CD4-positive, alpha-beta memory T cell (primary cell): ENCODE measurements at regions of chr17 and their contacts with region 1.

Region 1: GRCh38 chr17:7045909-7046724 is 2.2 kb upstream of the SLC16A11 start:
- DNase-seq: peak; percentile 60 to 79 (median 74)
- H3K4me3 ChIP-seq: peak overlapping the region; percentile 67 to 84
- H3K4me3 Mint-ChIP-seq: peak overlapping the region; percentile 83 to 94 (median 90)
- H3K27ac ChIP-seq: peak overlapping the region; percentile 76
- H3K27ac Mint-ChIP-seq: peak overlapping the region; percentile 88 to 98 (median 95)
- H3K4me1 ChIP-seq: peaks cover 47% of the 10 kb centered on the region
- H3K4me1 Mint-ChIP-seq: peaks cover 15 to 54% (median 27%) of the 10 kb centered on the region in 4 donors
- H3K27me3 ChIP-seq: no peaks in the 10 kb centered on the region
- H3K27me3 Mint-ChIP-seq: peaks cover 2% of the 10 kb centered on the region in 2 donors

Region 2: DNA sequence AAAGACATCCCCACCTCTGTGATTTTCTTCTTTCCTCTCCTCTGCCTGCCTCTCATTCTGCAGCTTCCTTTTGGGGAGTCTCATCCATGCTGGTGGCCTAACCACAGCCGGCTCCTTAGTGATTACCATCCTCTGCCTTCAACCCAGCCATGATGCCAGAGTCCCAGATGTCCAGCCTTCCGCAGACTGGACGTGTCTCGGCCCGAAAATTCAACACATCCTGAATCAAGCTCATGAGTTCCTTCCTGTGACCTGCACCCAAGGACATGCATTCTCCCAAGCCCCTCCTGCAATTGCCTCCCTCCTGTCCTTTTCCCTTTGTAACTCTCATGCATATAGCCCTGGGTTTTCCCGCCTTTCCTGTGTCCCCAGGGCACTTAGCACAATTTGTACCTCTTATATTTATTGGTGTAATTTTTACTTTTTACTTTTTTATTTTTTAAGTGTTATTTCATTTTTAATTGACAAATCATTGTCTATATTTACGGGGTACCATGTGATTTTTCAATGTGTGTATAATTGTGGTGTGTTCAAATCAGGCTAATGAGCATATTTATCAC is 331.7 kb before region 1 on chr17:
- CTCF ChIA-PET with region 1: no interaction called
- POLR2A ChIA-PET with region 1: no interaction called
- intact Hi-C with region 1: no loop called
- DNase-seq: no peak
- H3K4me3 ChIP-seq: no peak overlapping the region
- H3K4me3 Mint-ChIP-seq: peak overlapping the region in 5 of 8 donors; percentile 21 to 72 (median 42)
- H3K27ac ChIP-seq: no peak overlapping the region
- H3K27ac Mint-ChIP-seq: no peak overlapping the region
- H3K4me1 ChIP-seq: peaks cover 8% of the 10 kb centered on the region
- H3K4me1 Mint-ChIP-seq: peaks cover 10 to 20% (median 15%) of the 10 kb centered on the region in 4 donors
- H3K27me3 ChIP-seq: peaks cover 8% of the 10 kb centered on the region
- H3K27me3 Mint-ChIP-seq: peaks cover 43 to 55% of the 10 kb centered on the region in 2 donors

Region 3: DNA sequence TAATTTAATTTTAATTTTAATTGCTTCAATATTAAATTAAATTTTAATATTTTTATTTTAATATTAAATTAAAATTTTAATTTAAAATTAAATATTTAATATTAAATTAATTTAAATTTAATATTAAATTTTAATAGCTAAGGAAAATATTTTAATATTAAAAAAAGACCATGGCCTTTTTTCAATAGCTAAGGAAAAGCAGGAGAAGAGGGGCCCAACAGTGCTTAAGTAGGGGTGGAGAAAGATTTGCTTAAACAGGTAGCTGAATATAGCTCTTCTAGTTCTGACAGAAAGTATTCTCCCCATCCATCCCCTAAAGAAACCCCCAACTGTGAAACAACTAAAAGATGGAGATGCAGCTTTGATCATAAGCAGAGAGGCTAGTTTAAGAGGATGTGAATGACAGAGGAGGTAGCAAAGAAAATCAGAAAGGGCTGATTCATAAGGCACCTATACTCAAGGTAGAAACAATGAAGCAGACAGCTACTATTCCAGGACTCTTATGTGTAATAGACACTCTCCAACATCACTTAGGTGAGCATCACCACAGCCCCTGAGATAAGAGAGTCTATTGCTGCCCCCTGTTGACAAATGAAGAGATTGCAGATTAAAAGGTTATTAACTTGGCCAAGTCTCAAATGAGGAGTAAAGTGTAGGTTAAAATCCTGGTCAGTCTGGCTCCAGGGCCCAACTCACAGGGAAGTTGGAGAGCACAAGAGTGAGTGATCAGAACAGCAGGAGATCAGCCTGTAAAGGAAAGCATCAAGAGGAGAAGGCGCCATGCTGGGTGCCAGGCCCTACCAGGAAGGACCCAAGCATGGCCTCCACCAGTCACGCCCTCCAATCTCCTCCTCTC is 41.5 kb before region 1 on chr17:
- CTCF ChIA-PET with region 1: interaction called, 10 read pairs
- POLR2A ChIA-PET with region 1: no interaction called
- intact Hi-C with region 1: no loop called
- DNase-seq: peak; percentile 66 to 77 (median 77)
- H3K4me3 ChIP-seq: no peak overlapping the region
- H3K4me3 Mint-ChIP-seq: peak overlapping the region in 1 of 8 donors; percentile 5
- H3K27ac ChIP-seq: no peak overlapping the region
- H3K27ac Mint-ChIP-seq: peak overlapping the region; percentile 7 to 89 (median 81)
- H3K4me1 ChIP-seq: peaks cover 19% of the 10 kb centered on the region
- H3K4me1 Mint-ChIP-seq: peaks cover 16 to 33% (median 28%) of the 10 kb centered on the region in 4 donors
- H3K27me3 ChIP-seq: no peaks in the 10 kb centered on the region
- H3K27me3 Mint-ChIP-seq: no peaks in the 10 kb centered on the region

Region 4: GRCh38 chr17:7035591-7036368 is 10.3 kb before region 1 on chr17 and contains the start of gene SLC16A13:
- CTCF ChIA-PET with region 1: interaction called, 19 read pairs
- POLR2A ChIA-PET with region 1: interaction called, 95 read pairs
- intact Hi-C with region 1: no loop called
- DNase-seq: peak; percentile 97 to 100 (median 98)
- H3K4me3 ChIP-seq: peak within 1 kb of the TSS; percentile 32 to 81
- H3K4me3 Mint-ChIP-seq: peak within 1 kb of the TSS; percentile 90 to 96 (median 94)
- H3K27ac ChIP-seq: peak within 1 kb of the TSS; percentile 87
- H3K27ac Mint-ChIP-seq: peak within 1 kb of the TSS; percentile 97 to 99 (median 98)
- H3K4me1 ChIP-seq: peaks cover 65% of the 10 kb centered on the region
- H3K4me1 Mint-ChIP-seq: peaks cover 25 to 81% (median 49%) of the 10 kb centered on the region in 4 donors
- H3K27me3 ChIP-seq: no peaks in the 10 kb centered on the region
- H3K27me3 Mint-ChIP-seq: no peaks in the 10 kb centered on the region
- total RNA-seq, gene SLC16A13: 13.1 to 13.7 TPM

Region 5: GRCh38 chr17:7177196-7177953 is 131.3 kb after region 1 on chr17:
- CTCF ChIA-PET with region 1: interaction called, 9 read pairs
- POLR2A ChIA-PET with region 1: interaction called, 7 read pairs
- intact Hi-C with region 1: loop called (anchors 1 kb)
- DNase-seq: peak; percentile 57 to 67 (median 60)
- H3K4me3 ChIP-seq: no peak overlapping the region
- H3K4me3 Mint-ChIP-seq: peak overlapping the region; percentile 66 to 78 (median 68)
- H3K27ac ChIP-seq: no peak overlapping the region
- H3K27ac Mint-ChIP-seq: peak overlapping the region in 4 of 7 donors; percentile 32 to 84 (median 48)
- H3K4me1 ChIP-seq: peaks cover 25% of the 10 kb centered on the region
- H3K4me1 Mint-ChIP-seq: peaks cover 7 to 12% (median 8%) of the 10 kb centered on the region in 4 donors
- H3K27me3 ChIP-seq: peaks cover 18% of the 10 kb centered on the region
- H3K27me3 Mint-ChIP-seq: peaks cover 8 to 11% of the 10 kb centered on the region in 2 donors

Region 6: DNA sequence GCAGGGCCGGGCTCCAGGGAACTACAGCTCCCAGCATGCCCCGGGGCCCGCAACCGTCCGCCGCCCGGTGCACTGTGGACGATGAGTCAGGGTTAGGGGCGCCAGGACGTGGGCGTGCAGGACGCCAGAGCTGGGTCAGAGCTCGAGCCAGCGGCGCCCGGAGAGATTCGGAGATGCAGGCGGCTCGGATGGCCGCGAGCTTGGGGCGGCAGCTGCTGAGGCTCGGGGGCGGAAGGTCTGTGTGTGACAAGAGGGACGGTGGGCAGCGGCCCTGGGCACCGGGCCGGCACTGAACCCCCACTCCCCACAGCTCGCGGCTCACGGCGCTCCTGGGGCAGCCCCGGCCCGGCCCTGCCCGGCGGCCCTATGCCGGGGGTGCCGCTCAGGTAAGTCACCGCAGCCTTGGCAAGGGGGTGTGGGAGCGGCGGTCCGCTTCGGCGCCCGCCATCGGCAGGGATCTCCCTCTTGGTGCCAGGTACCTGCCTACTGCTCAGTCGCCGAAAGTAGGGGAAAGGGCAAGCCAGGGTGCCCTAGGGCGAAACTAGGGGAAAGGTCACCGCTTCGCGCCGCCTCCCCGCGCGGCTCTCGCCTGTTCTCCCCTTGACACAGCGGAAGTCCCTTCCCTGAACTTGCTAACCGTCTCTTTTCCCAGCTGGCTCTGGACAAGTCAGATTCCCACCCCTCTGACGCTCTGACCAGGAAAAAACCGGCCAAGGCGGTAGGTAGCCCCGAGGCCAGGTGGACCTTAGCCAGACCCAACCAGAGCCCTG is 173.9 kb after region 1 on chr17 and contains the starts of genes ACADVL and DLG4:
- CTCF ChIA-PET with region 1: interaction called, 11 read pairs
- POLR2A ChIA-PET with region 1: interaction called, 10 read pairs
- intact Hi-C with region 1: loop called (anchors 2 kb)
- DNase-seq: peak; percentile 54 to 77 (median 56)
- H3K4me3 ChIP-seq: peak within 1 kb of the TSS; percentile 54 to 89
- H3K4me3 Mint-ChIP-seq: peak within 1 kb of the TSS; percentile 87 to 98 (median 92)
- H3K27ac ChIP-seq: peak within 1 kb of the TSS; percentile 80
- H3K27ac Mint-ChIP-seq: peak within 1 kb of the TSS; percentile 94 to 99 (median 98)
- H3K4me1 ChIP-seq: peaks cover 54% of the 10 kb centered on the region
- H3K4me1 Mint-ChIP-seq: peaks cover 27 to 62% (median 41%) of the 10 kb centered on the region in 4 donors
- H3K27me3 ChIP-seq: no peaks in the 10 kb centered on the region
- H3K27me3 Mint-ChIP-seq: no peaks in the 10 kb centered on the region
- total RNA-seq, gene ACADVL: 340 to 342 TPM
- total RNA-seq, gene DLG4: 7.2 to 7.6 TPM

Region 7: DNA sequence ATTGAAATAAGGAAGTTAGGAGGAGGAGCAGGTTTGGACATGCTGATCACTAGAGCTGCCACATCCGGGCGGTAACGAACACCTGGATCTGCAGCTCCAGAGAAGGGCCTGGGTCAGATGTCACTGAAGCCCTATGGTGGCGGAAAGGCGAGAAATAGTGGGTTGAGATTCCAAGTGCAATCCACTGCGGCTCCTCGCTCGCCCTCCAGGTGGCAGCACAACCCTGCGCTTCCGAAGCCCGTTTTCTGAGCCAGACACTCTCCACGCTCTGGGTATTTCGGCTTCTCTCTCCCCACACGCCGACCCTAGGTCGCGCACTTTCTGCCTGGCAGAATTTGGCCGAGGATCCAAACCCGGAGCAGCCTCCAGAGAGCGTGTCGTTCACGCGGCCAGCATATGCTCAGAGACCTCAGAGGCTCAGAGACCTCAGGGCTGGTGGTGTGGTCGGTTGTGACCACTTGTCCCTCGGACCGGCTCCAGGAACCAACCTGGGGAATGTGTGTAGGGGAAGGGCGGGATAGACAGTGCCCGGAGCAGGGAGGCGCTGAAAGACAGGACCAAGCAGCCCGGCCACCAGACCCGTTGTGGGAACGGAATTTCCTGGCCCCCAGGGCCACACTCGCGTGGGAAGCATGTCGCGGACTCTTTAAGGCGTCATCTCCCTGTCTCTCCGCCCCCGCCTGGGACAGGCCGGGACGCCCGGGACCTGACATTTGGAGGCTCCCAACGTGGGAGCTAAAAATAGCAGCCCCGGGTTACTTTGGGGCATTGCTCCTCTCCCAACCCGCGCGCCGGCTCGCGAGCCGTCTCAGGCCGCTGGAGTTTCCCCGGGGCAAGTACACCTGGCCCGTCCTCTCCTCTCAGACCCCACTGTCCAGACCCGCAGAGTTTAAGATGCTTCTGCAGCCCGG is 234.7 kb after region 1 on chr17:
- CTCF ChIA-PET with region 1: interaction called, 6 read pairs
- POLR2A ChIA-PET with region 1: interaction called, 4 read pairs
- intact Hi-C with region 1: loop called (anchors 5 kb)
- DNase-seq: peak; percentile 82 to 86 (median 85)
- H3K4me3 ChIP-seq: peak overlapping the region; percentile 23 to 58
- H3K4me3 Mint-ChIP-seq: peak overlapping the region; percentile 77 to 90 (median 82)
- H3K27ac ChIP-seq: peak overlapping the region; percentile 41
- H3K27ac Mint-ChIP-seq: peak overlapping the region; percentile 36 to 84 (median 66)
- H3K4me1 ChIP-seq: peaks cover 25% of the 10 kb centered on the region
- H3K4me1 Mint-ChIP-seq: peaks cover 4 to 28% (median 18%) of the 10 kb centered on the region in 4 donors
- H3K27me3 ChIP-seq: peaks cover 10% of the 10 kb centered on the region
- H3K27me3 Mint-ChIP-seq: peaks cover 15 to 19% of the 10 kb centered on the region in 2 donors